ENCODE measurements at regions of chr15 and their contacts with region 1.

Region 1: DNA sequence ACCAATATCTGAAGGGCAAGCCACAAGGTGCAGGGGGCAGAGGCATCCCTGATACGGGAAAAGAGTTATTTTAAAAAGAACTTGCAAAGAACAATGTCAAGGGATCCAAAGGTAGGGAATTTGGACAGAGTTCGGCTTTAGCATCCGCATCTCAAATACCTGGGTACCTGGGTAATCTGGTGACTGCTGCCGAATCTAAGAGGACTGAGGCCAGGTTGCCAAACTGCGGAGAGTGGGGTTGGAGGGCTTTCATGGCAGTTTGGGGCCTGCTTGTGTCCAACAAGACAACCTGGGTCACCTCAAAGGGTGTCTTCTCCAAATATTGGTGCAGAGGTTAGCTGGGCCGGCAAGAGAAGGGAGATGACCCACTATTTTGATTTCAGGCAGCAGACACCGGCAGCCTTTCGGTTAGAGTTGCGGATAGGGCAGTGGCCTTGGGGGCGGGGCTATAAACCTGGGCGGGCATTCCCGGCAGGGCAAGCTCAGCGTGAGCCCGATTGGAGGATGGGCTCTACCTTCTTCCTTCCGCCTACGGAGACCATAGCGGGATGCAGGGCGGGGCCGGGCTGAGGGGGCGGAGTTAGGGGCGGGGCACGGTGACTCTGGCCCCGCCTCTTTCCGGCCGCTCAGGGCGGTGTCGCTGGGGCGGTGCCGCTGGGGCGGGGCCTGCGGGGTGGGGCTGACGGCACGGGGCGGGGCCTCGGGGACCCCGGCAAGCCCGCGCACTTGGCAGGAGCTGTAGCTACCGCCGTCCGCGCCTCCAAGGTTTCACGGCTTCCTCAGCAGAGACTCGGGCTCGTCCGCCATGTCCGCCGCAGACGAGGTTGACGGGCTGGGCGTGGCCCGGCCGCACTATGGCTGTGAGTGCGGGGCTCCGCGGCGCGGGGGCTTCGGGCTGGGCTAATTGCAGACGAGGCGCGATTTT is at the start of gene IQGAP1:
- DNase-seq: peak; percentile 83
- ATAC-seq: peak; percentile 95
- H3K4me3 ChIP-seq: peak within 1 kb of the TSS; percentile 94
- H3K27ac ChIP-seq: peak within 1 kb of the TSS; percentile 91
- H3K4me1 ChIP-seq: peaks cover 4% of the 10 kb centered on the region; the same call in 1 of the 2 replicates
- H3K27me3 ChIP-seq: no peaks in the 10 kb centered on the region
- CTCF ChIP-seq: no peak
- EP300 ChIP-seq: no peak
- POLR2A ChIP-seq: peak; percentile 96
- RAD21 ChIP-seq: no peak
- polyA plus RNA-seq, gene IQGAP1: 65.2 to 66.6 TPM

Region 2: DNA sequence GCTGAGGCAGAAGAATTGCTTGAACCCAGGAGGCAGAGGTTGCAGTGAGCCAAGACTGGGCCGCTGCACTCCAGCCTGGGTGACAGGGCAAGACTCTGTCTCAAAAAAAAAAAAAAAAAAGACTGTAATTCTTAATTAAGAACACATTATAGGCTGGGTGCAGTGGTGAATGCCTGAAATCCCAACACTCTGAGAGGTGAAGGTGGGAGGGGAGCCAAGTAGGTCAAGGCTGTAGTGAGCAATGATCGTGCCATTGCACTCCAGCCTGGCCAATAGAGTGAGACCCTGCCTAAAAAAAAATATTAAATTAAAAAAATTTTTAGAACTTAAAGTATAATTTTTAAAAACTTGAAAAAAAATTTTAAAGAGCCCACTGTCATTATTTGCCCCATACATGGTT is 461.6 kb before region 1 on chr15:
- CTCF ChIA-PET with region 1: no interaction called
- POLR2A ChIA-PET with region 1: no interaction called
- RAD21 ChIA-PET with region 1: no interaction called
- SMC1A ChIA-PET with region 1: no interaction called
- in situ Hi-C with region 1: no loop called
- intact Hi-C with region 1: no loop called
- DNase-seq: no peak
- ATAC-seq: no peak
- H3K4me3 ChIP-seq: no peak overlapping the region
- H3K27ac ChIP-seq: no peak overlapping the region
- H3K4me1 ChIP-seq: no peaks in the 10 kb centered on the region
- H3K27me3 ChIP-seq: no peaks in the 10 kb centered on the region
- CTCF ChIP-seq: no peak
- EP300 ChIP-seq: no peak
- POLR2A ChIP-seq: no peak
- RAD21 ChIP-seq: no peak

Region 3: GRCh38 chr15:90412356-90413194 is 24.8 kb after region 1 on chr15:
- CTCF ChIA-PET with region 1: no interaction called
- POLR2A ChIA-PET with region 1: interaction called, 11 read pairs
- RAD21 ChIA-PET with region 1: interaction called, 10 read pairs
- SMC1A ChIA-PET with region 1: interaction called, 7 read pairs
- in situ Hi-C with region 1: no loop called
- intact Hi-C with region 1: no loop called
- DNase-seq: peak; percentile 72
- ATAC-seq: peak; percentile 95
- H3K4me3 ChIP-seq: peak overlapping the region; percentile 8; the same call in 1 of the 2 replicates
- H3K27ac ChIP-seq: peak overlapping the region; percentile 45
- H3K4me1 ChIP-seq: peaks cover 23% of the 10 kb centered on the region
- H3K27me3 ChIP-seq: no peaks in the 10 kb centered on the region
- CTCF ChIP-seq: no peak
- EP300 ChIP-seq: no peak
- POLR2A ChIP-seq: no peak
- RAD21 ChIP-seq: no peak

Region 4: DNA sequence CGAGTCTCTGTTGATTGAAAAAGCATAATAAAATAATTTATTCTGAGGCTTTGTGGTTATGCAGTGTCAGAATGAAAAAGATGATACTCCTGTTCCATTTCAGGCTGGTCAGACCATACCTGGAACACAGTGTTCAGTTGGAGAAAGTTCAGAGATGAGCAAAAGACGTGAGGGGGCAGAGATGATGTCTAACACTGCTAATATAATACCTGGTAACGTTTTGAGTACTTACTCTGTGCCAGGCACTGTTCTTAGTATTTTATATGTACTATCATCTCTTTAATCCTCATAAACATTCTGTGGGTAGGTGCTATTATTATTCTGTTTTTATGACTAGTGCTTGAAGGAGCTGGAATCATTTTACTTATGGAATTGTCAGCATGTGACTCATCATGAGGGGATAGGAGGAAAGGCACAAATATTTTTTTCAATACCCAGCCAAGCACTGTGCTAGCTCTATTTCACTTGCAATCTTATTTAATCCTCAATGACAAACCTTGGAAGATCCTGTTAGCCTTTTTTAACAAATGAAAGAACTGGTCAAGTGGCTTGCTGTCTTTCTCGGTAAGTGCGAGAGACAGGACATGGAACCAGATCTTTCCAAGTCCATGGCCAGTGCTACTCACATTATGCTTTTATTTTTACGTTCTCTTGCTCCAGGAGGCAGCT is 32.1 kb after region 1 on chr15:
- CTCF ChIA-PET with region 1: no interaction called
- POLR2A ChIA-PET with region 1: interaction called, 10 read pairs
- RAD21 ChIA-PET with region 1: interaction called, 10 read pairs
- SMC1A ChIA-PET with region 1: interaction called, 6 read pairs
- in situ Hi-C with region 1: no loop called
- intact Hi-C with region 1: no loop called
- DNase-seq: peak; percentile 19
- ATAC-seq: peak; percentile 91
- H3K4me3 ChIP-seq: no peak overlapping the region
- H3K27ac ChIP-seq: peak overlapping the region; percentile 73
- H3K4me1 ChIP-seq: peaks cover 30% of the 10 kb centered on the region
- H3K27me3 ChIP-seq: no peaks in the 10 kb centered on the region
- CTCF ChIP-seq: no peak
- EP300 ChIP-seq: no peak
- POLR2A ChIP-seq: no peak
- RAD21 ChIP-seq: no peak

Region 5: GRCh38 chr15:90742087-90742486 is 354.3 kb after region 1 on chr15:
- CTCF ChIA-PET with region 1: no interaction called
- POLR2A ChIA-PET with region 1: no interaction called
- RAD21 ChIA-PET with region 1: no interaction called
- SMC1A ChIA-PET with region 1: no interaction called
- in situ Hi-C with region 1: no loop called
- intact Hi-C with region 1: no loop called
- DNase-seq: no peak
- ATAC-seq: no peak
- H3K4me3 ChIP-seq: no peak overlapping the region
- H3K27ac ChIP-seq: no peak overlapping the region
- H3K4me1 ChIP-seq: no peaks in the 10 kb centered on the region; the same call in 1 of the 2 replicates
- H3K27me3 ChIP-seq: no peaks in the 10 kb centered on the region
- CTCF ChIP-seq: no peak
- EP300 ChIP-seq: no peak
- POLR2A ChIP-seq: no peak
- RAD21 ChIP-seq: no peak

Measured in GM12878 (cell line).